ENCODE measurements at regions of chr19 and their contacts with region 1.

Region 1: DNA sequence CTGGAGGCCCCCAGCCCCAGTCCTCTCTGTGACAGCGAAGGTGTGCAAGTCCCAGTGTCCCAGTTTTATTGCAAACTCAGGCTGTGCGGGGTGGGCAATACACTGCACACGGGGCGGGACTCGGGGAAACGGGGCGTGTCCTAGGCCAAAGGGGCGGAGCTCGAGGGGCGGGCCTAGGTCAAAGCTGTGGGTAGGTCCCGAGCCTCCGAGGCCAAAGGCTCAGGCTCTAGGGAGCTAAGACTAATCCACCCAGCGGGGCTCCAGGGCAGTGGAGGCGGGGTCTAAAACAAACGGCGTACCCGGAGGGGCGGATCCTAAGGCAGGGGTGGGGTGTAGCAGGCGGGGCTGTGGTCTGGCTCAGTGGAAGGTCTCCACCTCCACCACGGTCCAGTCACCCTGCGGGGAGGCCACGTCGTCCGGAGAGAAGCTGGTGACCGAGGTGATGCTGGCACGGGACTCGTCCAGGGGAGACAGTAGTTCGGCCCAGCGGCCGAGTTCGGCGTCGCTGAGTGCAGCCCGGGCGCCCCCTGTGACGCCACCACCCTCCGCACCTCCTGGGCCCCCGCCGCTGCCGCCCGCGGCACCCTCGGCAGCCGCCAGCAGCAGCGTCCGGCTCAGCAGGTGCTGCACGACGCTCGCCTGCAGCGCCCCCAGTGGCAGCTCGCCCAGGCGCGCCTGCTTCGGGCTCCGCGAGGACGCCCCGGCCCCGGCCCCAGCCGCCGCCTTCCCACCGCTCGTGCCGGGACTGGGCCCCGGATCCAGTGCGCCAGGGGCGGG is 5.3 kb downstream of the PRR36 start:
- DNase-seq: peak; percentile 79
- H3K4me3 Mint-ChIP-seq: peak overlapping the region; percentile 63
- H3K27ac Mint-ChIP-seq: peak overlapping the region; percentile 75
- H3K4me1 Mint-ChIP-seq: peaks cover 44% of the 10 kb centered on the region
- H3K27me3 Mint-ChIP-seq: peaks cover 36% of the 10 kb centered on the region

Region 2: DNA sequence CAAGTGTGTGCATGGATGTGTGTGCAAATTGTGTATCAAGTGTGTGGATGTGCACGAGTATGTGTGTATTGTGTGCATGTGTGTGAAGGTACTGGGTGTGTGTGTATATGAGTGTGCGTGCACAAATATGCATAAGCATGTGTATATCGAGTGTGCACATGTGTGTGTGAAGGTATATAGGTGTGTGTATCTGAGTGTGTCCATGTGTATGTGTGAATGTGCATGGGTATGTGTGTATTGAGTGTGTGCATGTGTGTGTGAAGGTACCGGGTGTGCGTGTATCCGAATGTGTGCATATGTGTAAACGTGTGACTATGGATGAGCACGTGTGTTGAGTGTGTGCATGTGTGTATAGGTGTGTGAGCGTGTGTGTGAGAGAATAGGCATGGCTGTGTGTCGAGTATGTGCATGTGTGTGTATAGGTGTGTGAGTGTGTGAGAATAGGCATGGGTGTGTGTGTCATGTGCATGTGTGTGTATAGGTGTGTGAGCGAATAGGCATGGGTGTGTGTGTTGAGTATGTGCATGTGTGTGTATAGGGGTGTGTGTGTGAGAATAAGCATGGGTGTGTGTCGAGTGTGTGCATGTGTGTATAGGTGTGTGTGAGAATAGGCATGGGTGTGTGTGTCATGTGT is 26.1 kb before region 1 on chr19:
- CTCF ChIA-PET with region 1: no interaction called
- POLR2A ChIA-PET with region 1: no interaction called
- DNase-seq: no peak
- H3K4me3 Mint-ChIP-seq: no peak overlapping the region
- H3K27ac Mint-ChIP-seq: no peak overlapping the region
- H3K4me1 Mint-ChIP-seq: no peaks in the 10 kb centered on the region
- H3K27me3 Mint-ChIP-seq: no peaks in the 10 kb centered on the region

Region 3: GRCh38 chr19:7852851-7853769 is 15.8 kb before region 1 on chr19:
- CTCF ChIA-PET with region 1: interaction called, 28 read pairs
- POLR2A ChIA-PET with region 1: no interaction called
- DNase-seq: peak; percentile 67
- H3K4me3 Mint-ChIP-seq: no peak overlapping the region
- H3K27ac Mint-ChIP-seq: peak overlapping the region; percentile 25
- H3K4me1 Mint-ChIP-seq: peaks cover 3% of the 10 kb centered on the region
- H3K27me3 Mint-ChIP-seq: no peaks in the 10 kb centered on the region

Region 4: DNA sequence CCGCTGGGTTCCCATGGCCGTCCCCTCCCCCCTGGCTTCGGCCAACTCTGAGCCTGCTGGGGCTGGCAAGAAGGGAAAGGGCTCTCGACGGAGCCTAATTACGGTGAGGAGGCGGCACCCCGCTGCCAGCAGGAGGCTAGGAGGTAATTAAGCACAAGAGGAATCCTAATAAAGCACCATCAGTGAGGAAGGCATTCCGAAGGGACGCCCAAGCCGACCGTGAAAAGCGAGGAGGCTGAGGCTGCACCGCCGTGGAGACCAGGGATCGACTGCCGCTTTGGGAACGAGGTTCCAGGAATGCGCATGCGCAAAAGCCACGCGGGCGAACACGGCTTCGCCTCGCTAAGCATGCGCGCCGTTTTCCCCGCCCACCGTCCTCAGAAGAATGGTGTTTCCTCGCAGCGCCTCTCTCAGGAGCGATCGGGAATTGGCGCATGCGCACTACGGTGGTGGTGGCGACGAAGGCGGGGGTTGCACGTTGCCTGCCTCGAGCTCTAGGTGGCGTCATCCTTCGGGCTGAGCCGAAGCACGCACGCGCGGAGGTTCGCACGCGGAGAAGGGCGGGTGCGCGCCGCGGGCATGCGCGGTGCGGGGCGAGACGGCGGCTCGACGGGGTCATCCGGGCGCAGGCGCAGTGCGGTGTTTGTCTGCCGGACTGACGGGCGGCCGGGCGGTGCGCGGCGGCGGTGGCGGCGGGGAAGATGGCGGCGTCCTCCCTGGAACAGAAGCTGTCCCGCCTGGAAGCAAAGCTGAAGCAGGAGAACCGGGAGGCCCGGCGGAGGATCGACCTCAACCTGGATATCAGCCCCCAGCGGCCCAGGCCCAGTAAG is 34.6 kb after region 1 on chr19 and contains the start of gene MAP2K7:
- CTCF ChIA-PET with region 1: interaction called, 20 read pairs
- POLR2A ChIA-PET with region 1: no interaction called
- DNase-seq: peak; percentile 100
- H3K4me3 Mint-ChIP-seq: peak within 1 kb of the TSS; percentile 81
- H3K27ac Mint-ChIP-seq: peak within 1 kb of the TSS; percentile 94
- H3K4me1 Mint-ChIP-seq: peaks cover 29% of the 10 kb centered on the region
- H3K27me3 Mint-ChIP-seq: no peaks in the 10 kb centered on the region
- total RNA-seq, gene MAP2K7: 44.1 to 45.6 TPM

Region 5: DNA sequence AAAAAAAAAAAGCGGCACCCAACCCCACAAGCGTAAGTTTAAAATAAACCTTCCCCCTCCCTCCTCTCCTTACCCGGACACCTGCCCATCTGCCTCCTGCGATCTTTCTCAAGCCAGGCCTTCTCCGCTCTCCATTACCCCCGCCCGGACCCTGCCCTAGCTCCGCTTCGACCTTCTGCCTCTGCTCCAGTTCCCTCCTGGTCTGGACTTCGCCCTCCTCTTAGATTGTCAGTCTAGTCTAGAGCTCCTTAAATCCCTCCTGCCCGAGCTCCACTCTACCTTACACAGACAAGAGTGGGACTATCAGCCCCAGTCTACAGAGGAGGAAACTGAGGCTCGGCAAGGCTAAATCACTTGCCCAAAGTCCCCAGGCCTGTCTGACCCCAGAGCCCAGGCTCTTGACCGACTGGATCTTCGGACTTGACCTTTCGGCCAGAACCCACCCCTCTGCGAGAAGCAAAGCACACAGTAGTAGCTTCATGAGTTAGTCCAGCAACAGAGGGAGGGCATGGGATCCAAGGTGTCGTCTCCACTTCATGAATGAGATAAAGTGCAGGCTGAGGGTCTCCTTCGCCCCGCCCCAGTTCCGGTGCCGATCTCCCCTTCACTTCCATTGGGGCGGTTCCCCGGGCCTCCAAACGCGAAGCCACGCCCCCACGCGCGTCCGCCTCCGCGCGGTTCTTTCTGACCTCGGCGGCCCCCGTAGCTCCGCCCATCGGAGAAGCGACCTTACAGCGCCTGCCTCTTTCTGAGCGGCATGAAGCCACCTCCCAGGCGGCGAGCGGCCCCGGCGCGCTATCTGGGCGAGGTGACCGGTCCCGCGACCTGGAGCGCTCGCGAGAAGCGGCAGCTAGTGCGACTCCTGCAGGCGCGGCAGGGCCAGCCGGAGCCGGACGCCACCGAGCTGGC is 51.0 kb after region 1 on chr19 and contains the start of gene SNAPC2:
- CTCF ChIA-PET with region 1: interaction called, 13 read pairs
- POLR2A ChIA-PET with region 1: no interaction called
- DNase-seq: peak; percentile 97
- H3K4me3 Mint-ChIP-seq: peak within 1 kb of the TSS; percentile 87
- H3K27ac Mint-ChIP-seq: peak within 1 kb of the TSS; percentile 94
- H3K4me1 Mint-ChIP-seq: peaks cover 38% of the 10 kb centered on the region
- H3K27me3 Mint-ChIP-seq: peaks cover 35% of the 10 kb centered on the region
- total RNA-seq, gene SNAPC2: 18.6 to 19.1 TPM

Region 6: DNA sequence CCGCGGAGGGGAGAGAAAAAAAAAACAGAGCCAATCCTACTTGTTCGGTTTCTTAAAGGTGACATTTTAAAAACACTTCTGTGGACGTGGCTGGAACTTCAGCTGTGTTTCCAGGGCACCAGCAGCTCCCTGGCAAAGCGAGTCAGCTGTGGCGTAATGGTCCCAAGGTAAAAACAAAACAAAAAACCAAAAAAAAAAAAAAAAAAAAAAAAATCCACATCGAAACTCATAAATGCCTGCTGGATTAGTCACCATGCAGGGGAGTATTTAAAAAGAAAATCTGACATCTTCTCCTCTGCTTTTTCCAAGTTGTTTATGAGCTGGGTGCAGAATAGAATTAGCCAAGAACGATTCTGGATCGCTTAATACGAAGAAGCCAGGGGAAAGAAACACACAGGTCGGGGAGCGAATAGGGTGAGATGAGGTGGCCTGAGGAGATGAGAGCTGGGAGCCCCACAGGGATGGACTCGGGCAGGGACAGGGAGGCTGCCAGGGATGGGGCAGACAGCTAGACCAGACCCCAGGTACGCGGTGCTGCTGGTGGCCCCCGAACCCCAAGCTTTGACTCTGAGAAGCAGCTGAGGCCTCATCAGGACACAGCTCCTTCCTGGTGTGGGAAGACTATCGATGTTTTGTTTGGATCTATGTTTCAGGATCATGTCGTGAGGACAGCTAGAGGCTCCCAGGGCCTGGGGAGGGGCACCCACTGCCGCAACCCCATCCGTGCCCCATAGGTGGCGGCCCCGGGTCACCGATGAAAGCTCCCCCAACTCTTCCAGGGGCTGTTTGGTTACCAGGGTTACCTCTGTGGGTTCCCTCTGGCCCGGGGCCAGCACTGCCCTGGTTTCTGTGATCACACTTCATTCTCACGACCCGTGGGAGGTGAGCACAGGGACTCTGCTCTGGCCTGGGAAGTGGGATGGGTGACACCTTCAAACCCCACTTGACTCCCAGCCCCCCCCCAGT is 60.2 kb after region 1 on chr19:
- CTCF ChIA-PET with region 1: interaction called, 11 read pairs
- POLR2A ChIA-PET with region 1: no interaction called
- DNase-seq: peak; percentile 68
- H3K4me3 Mint-ChIP-seq: no peak overlapping the region
- H3K27ac Mint-ChIP-seq: peak overlapping the region; percentile 54
- H3K4me1 Mint-ChIP-seq: peaks cover 8% of the 10 kb centered on the region
- H3K27me3 Mint-ChIP-seq: no peaks in the 10 kb centered on the region